SK-N-SH (cell line): ENCODE measurements at regions of chr12 and their contacts with region 1.

Region 1: GRCh38 chr12:64696080-64696741 is 63.0 kb downstream of the GNS start:
- DNase-seq: peak; percentile 27
- H3K4me3 ChIP-seq: no peak overlapping the region
- H3K27ac ChIP-seq: no peak overlapping the region
- H3K4me1 ChIP-seq: peaks cover 2 to 12% of the 10 kb centered on the region in 2 experiments; a peak in 2 of 4 replicates
- H3K27me3 ChIP-seq: no peaks in the 10 kb centered on the region
- CTCF ChIP-seq: peak; percentile 59
- EP300 ChIP-seq: no peak
- RAD21 ChIP-seq: peak; percentile 68

Region 2: DNA sequence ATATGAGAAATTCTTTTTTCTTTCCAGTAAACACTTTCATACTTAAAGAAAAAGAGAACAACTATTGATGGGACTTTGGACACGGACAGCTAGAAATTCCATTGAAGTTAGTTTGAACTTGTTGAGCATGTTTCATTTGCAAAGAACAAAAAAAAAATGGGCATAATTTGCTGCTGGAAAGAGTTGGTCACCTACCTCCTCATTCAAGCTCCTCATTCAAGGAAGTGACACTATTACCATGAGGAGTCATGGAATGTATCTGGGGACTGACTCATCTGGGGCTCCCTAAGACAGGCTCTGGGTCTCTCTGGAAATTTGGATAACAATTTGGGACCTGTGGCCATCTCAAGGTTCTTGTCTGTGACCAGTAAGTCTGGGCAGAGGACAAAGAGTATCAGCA is 524.5 kb before region 1 on chr12:
- CTCF ChIA-PET with region 1: no interaction called
- POLR2A ChIA-PET with region 1: no interaction called
- DNase-seq: no peak
- H3K4me3 ChIP-seq: no peak overlapping the region
- H3K27ac ChIP-seq: peak overlapping the region in 1 of 2 experiments; percentile 71; a peak in 2 of 4 replicates
- H3K4me1 ChIP-seq: peaks cover 2 to 25% of the 10 kb centered on the region in 2 experiments; a peak in 2 of 4 replicates
- H3K27me3 ChIP-seq: no peaks in the 10 kb centered on the region
- CTCF ChIP-seq: no peak
- EP300 ChIP-seq: peak in 1 of 2 experiments; percentile 66; a peak in 2 of 4 replicates
- RAD21 ChIP-seq: no peak

Region 3: DNA sequence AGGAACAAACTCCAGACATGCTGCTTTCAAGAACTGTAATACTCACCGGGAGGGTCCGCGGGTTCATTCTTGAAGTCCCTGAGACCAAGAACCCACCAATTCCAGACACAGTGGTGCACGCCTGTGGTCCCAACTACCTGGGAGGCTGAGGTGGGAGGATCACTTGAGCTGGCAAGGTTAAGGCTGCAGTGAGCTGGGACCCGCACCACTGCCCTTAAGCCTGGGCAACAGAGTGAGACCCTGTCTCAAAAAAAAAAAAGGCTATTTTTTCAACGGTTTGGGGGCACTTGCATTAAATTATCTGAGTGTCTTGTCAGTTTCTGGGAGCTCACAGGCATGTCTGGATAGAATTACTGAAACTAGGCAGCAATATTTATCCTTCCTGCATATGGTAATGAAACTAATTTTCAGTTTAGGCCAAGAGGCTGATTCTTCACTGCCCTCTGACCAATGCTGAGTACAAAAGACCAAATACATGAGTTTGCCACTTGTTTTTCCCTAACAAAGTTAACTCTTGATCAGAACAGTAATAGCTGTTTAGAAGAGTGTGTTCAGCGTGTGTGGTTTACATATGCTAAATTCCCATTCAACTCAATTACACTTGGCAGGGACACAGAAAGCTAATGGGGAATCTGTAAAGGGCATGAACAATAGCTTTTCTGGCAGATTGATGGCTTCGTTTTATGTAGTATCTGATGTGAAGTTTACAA is 151.7 kb before region 1 on chr12:
- CTCF ChIA-PET with region 1: interaction called, 182 read pairs
- POLR2A ChIA-PET with region 1: no interaction called
- DNase-seq: peak; percentile 48
- H3K4me3 ChIP-seq: no peak overlapping the region
- H3K27ac ChIP-seq: peak overlapping the region in 1 of 2 experiments; percentile 69; a peak in 2 of 4 replicates
- H3K4me1 ChIP-seq: peaks cover 5 to 8% of the 10 kb centered on the region in 2 experiments; a peak in 3 of 4 replicates
- H3K27me3 ChIP-seq: no peaks in the 10 kb centered on the region
- CTCF ChIP-seq: no peak
- EP300 ChIP-seq: peak in 1 of 2 experiments; percentile 76; a peak in 2 of 4 replicates
- RAD21 ChIP-seq: 0 out of 2 replicates have a peak, but pooled peaks have one; percentile 2

Region 4: GRCh38 chr12:64610149-64610678 is 86.0 kb before region 1 on chr12 and contains the start of gene RASSF3:
- CTCF ChIA-PET with region 1: interaction called, 25 read pairs
- POLR2A ChIA-PET with region 1: interaction called, 3 read pairs
- DNase-seq: peak; percentile 94
- H3K4me3 ChIP-seq: peak within 1 kb of the TSS; percentile 74 to 91
- H3K27ac ChIP-seq: peak within 1 kb of the TSS; percentile 73 to 87
- H3K4me1 ChIP-seq: peaks cover 7 to 10% of the 10 kb centered on the region in 2 experiments; a peak in 3 of 4 replicates
- H3K27me3 ChIP-seq: no peaks in the 10 kb centered on the region
- CTCF ChIP-seq: no peak
- EP300 ChIP-seq: no peak
- RAD21 ChIP-seq: no peak; the same call in 1 of the 2 replicates
- polyA plus RNA-seq, gene RASSF3: 11.1 and 15.0 TPM in 2 replicates

Region 5: GRCh38 chr12:64682572-64683277 is 13.5 kb before region 1 on chr12:
- CTCF ChIA-PET with region 1: interaction called, 28 read pairs
- POLR2A ChIA-PET with region 1: no interaction called
- DNase-seq: peak; percentile 80
- H3K4me3 ChIP-seq: no peak overlapping the region
- H3K27ac ChIP-seq: peak overlapping the region in 1 of 2 experiments; percentile 91; a peak in 2 of 4 replicates
- H3K4me1 ChIP-seq: peaks cover 21 to 25% of the 10 kb centered on the region in 2 experiments
- H3K27me3 ChIP-seq: no peaks in the 10 kb centered on the region
- CTCF ChIP-seq: no peak
- EP300 ChIP-seq: peak in 1 of 2 experiments; percentile 77; a peak in 2 of 4 replicates
- RAD21 ChIP-seq: peak; percentile 18; the same call in 1 of the 2 replicates

Region 6: GRCh38 chr12:64706306-64706705 is 10.1 kb after region 1 on chr12:
- CTCF ChIA-PET with region 1: interaction called, 18 read pairs
- POLR2A ChIA-PET with region 1: no interaction called
- DNase-seq: peak; percentile 27
- H3K4me3 ChIP-seq: no peak overlapping the region
- H3K27ac ChIP-seq: peak overlapping the region in 1 of 2 experiments; percentile 80; a peak in 2 of 4 replicates
- H3K4me1 ChIP-seq: peaks cover 7 to 20% of the 10 kb centered on the region in 2 experiments; a peak in 1 of 4 replicates
- H3K27me3 ChIP-seq: no peaks in the 10 kb centered on the region
- CTCF ChIP-seq: no peak
- EP300 ChIP-seq: no peak
- RAD21 ChIP-seq: no peak

Region 7: GRCh38 chr12:64714551-64714968 is 18.3 kb after region 1 on chr12:
- CTCF ChIA-PET with region 1: interaction called, 12 read pairs
- POLR2A ChIA-PET with region 1: no interaction called
- DNase-seq: no peak
- H3K4me3 ChIP-seq: no peak overlapping the region
- H3K27ac ChIP-seq: no peak overlapping the region
- H3K4me1 ChIP-seq: no peaks in the 10 kb centered on the region
- H3K27me3 ChIP-seq: no peaks in the 10 kb centered on the region
- CTCF ChIP-seq: no peak
- EP300 ChIP-seq: no peak
- RAD21 ChIP-seq: no peak